ENCODE measurements at regions of chr10 and their contacts with region 1.

Region 1: GRCh38 chr10:34637418-34637911 is 177.6 kb downstream of the PARD3 start:
- DNase-seq: peak; percentile 64 to 73
- ATAC-seq: peak; percentile 67 to 81 (median 72)
- H3K4me3 ChIP-seq: no peak overlapping the region
- H3K27ac ChIP-seq: no peak overlapping the region
- H3K4me1 ChIP-seq: peaks cover 35% of the 10 kb centered on the region
- H3K27me3 ChIP-seq: no peaks in the 10 kb centered on the region
- CTCF ChIP-seq: peak; percentile 96

Region 2: GRCh38 chr10:33193057-33193700 is 1444.3 kb before region 1 on chr10:
- intact Hi-C with region 1: loop called in 1 of 2 experiments (anchors 5 kb)
- DNase-seq: peak; percentile 73 to 83
- ATAC-seq: peak; percentile 78 to 93 (median 84)
- H3K4me3 ChIP-seq: peak overlapping the region; percentile 8
- H3K27ac ChIP-seq: peak overlapping the region; percentile 50
- H3K4me1 ChIP-seq: peaks cover 6% of the 10 kb centered on the region
- H3K27me3 ChIP-seq: no peaks in the 10 kb centered on the region
- CTCF ChIP-seq: peak; percentile 78

Region 3: GRCh38 chr10:33330543-33331378 is 1306.7 kb before region 1 on chr10:
- intact Hi-C with region 1: loop called (anchors 2 to 5 kb)
- DNase-seq: peak; percentile 82 to 90
- ATAC-seq: peak in 3 of 4 donors; percentile 36 to 53 (median 49)
- H3K4me3 ChIP-seq: peak overlapping the region; percentile 84
- H3K27ac ChIP-seq: peak overlapping the region; percentile 85
- H3K4me1 ChIP-seq: peaks cover 42% of the 10 kb centered on the region
- H3K27me3 ChIP-seq: no peaks in the 10 kb centered on the region
- CTCF ChIP-seq: peak; percentile 91

Region 4: GRCh38 chr10:34109952-34110702 is 527.3 kb before region 1 on chr10:
- intact Hi-C with region 1: loop called in 1 of 2 experiments (anchors 10 kb)
- DNase-seq: no peak
- ATAC-seq: no peak
- H3K4me3 ChIP-seq: no peak overlapping the region
- H3K27ac ChIP-seq: no peak overlapping the region
- H3K4me1 ChIP-seq: no peaks in the 10 kb centered on the region
- H3K27me3 ChIP-seq: no peaks in the 10 kb centered on the region
- CTCF ChIP-seq: no peak

Region 5: DNA sequence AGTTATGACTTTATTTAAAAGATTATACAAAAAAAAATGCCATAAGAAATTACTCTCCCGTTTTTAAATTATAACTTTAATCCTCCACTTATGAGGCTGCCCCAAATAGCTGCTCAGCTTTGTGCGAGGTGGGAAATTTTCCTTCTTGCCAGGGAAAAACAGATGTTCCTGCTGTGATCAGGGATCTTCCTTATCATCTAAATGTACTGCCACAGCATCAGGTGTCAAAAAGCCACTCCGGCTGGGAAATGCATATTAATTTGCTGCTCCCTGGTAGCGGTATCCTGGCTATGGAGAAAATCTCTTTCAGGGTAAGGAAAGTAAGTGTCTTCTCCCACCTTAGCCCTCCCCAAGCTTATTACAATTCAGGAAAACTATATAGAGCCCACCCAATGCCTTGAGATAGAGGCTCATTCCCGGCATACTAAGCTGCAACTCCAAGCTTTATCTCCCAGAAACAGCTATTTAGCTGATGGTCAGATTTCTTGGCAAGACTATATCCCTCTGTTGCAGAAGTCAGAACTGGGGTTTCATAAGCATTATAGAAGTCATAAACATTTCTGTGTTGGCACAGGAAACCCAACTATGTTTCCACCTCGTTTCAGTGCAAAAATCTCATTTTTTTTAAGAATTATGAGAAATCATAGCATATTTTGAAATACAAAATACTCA is 182.7 kb before region 1 on chr10:
- intact Hi-C with region 1: no loop called
- DNase-seq: no peak
- ATAC-seq: no peak
- H3K4me3 ChIP-seq: no peak overlapping the region
- H3K27ac ChIP-seq: no peak overlapping the region
- H3K4me1 ChIP-seq: no peaks in the 10 kb centered on the region
- H3K27me3 ChIP-seq: no peaks in the 10 kb centered on the region
- CTCF ChIP-seq: no peak

Region 6: GRCh38 chr10:34522546-34522945 is 114.9 kb before region 1 on chr10:
- intact Hi-C with region 1: loop called (anchors 5 to 10 kb)
- DNase-seq: no peak
- ATAC-seq: no peak
- H3K4me3 ChIP-seq: no peak overlapping the region
- H3K27ac ChIP-seq: no peak overlapping the region
- H3K4me1 ChIP-seq: peaks cover 14% of the 10 kb centered on the region
- H3K27me3 ChIP-seq: no peaks in the 10 kb centered on the region
- CTCF ChIP-seq: no peak

Region 7: DNA sequence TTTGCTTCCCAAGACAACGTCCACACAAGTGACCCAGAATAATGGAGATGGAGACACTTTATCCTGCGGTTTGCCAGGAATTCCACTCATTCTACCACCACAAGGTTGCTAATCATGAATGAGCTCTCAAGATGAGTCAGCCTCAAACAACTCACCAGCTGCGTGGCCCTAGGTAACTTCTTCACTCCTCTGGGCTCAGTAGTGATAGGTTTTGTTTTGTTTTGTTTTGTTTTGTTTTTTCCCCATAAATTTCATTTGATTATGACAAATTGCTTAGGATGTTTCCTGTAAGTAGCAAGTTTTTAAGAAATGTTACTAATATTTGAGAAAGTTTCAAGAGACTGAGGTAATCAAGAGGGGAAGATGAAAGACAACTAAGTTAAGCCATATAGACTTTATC is 109.1 kb before region 1 on chr10:
- intact Hi-C with region 1: loop called (anchors 5 to 10 kb)
- DNase-seq: peak in 1 of 2 donors; percentile 21
- ATAC-seq: peak; percentile 54 to 92 (median 82)
- H3K4me3 ChIP-seq: no peak overlapping the region
- H3K27ac ChIP-seq: no peak overlapping the region
- H3K4me1 ChIP-seq: peaks cover 27% of the 10 kb centered on the region
- H3K27me3 ChIP-seq: no peaks in the 10 kb centered on the region
- CTCF ChIP-seq: no peak

Region 8: GRCh38 chr10:34584164-34584563 is 53.3 kb before region 1 on chr10:
- intact Hi-C with region 1: no loop called
- DNase-seq: no peak
- ATAC-seq: peak; percentile 37 to 88 (median 84)
- H3K4me3 ChIP-seq: no peak overlapping the region
- H3K27ac ChIP-seq: no peak overlapping the region
- H3K4me1 ChIP-seq: peaks cover 26% of the 10 kb centered on the region
- H3K27me3 ChIP-seq: no peaks in the 10 kb centered on the region
- CTCF ChIP-seq: no peak